OCI-LY7 (cell line): ENCODE measurements at regions of chr2 and their contacts with region 1.

Region 1: DNA sequence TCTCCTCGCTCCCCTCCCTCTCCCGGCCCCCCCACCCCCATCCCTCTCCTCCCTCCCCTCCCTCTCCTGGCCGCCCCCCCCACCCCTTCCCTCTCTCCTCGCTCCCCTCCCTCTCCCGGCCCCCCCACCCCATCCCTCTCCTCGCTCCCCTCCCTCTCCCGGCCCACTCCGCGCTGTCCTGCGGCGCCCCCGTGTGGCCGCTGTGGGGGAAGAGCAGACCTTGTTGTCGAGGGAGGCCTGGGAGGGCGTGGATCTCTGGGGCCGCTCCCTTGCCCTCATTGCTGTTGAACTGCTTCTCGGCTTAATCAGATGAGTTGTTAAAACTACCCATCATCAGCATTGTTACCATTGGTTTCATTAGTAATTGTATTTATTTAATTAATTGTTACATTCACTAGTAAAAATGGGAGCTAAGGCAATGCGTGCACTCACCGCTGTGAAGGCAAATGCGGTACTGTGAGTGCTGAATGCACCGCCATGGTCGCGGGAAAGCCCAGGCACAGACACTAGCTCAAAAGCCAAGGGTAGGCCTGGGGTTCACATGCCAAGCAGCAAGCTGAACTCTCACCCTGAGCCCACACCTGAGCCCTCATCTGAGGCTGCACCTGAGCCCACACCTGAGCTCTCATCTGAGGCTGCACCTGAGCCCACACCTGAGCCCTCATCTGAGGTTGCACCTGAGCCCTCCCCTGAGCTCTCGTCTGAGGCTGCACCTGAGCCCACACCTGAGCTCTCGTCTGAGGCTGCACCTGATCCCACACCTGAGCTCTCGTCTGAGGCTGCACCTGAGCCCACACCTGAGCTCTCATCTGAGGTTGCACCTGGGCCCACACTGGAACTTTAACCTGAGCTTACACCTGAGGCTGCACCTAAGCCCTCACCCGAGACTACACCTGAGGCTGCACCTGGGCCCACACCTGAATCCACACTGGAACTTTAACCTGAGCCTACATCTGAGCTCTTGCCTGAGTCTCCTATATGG is 8.8 kb downstream of the RTP5 start:
- DNase-seq: peak; percentile 65
- H3K4me3 ChIP-seq: no peak overlapping the region
- H3K27ac ChIP-seq: no peak overlapping the region
- H3K4me1 ChIP-seq: peaks cover 23% of the 10 kb centered on the region
- CTCF ChIP-seq: peak; percentile 70

Region 2: GRCh38 chr2:241149925-241150659 is 728.2 kb before region 1 on chr2 and contains the start of gene PPP1R7:
- CTCF ChIA-PET with region 1: no interaction called
- POLR2A ChIA-PET with region 1: no interaction called
- intact Hi-C with region 1: loop called (anchors 10 kb)
- DNase-seq: peak; percentile 96
- H3K4me3 ChIP-seq: peak within 1 kb of the TSS; percentile 94
- H3K27ac ChIP-seq: peak within 1 kb of the TSS; percentile 35
- H3K4me1 ChIP-seq: peaks cover 37% of the 10 kb centered on the region
- CTCF ChIP-seq: no peak
- total RNA-seq, gene PPP1R7: 46.0 and 61.4 TPM in 2 replicates

Region 3: GRCh38 chr2:241686649-241687425 is 191.4 kb before region 1 on chr2 and contains the start of gene DTYMK:
- CTCF ChIA-PET with region 1: no interaction called
- POLR2A ChIA-PET with region 1: no interaction called
- intact Hi-C with region 1: loop called (anchors 5 kb)
- DNase-seq: peak; percentile 96
- H3K4me3 ChIP-seq: peak within 1 kb of the TSS; percentile 90
- H3K27ac ChIP-seq: peak within 1 kb of the TSS; percentile 69
- H3K4me1 ChIP-seq: peaks cover 17% of the 10 kb centered on the region
- CTCF ChIP-seq: no peak
- total RNA-seq, gene DTYMK: 104 and 118 TPM in 2 replicates

Region 4: DNA sequence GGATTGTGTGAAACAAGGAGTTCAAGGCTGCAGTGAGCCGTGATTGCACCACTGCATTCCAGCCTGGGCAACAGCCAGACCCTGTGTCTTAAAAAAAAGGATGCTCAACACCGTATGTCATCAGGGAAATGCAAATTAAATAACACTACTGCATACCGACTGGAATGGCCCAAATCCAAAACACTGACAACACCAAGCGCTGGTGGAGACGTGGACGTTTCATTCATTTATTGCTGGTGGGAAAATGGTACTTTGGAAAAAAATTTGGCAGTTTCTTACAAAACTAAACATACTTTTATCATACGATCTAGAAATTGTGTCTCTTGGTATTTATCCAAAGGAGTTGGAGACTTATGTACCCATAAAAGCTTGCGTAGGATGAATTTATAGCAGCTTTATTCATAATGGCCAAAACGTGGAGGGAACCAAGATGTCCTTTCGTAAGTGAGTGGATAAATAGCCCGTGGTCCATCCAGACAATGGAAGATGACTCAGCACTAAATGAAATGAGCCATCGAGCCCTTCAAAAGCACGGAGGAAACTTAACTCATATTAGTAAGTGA is 45.1 kb before region 1 on chr2:
- CTCF ChIA-PET with region 1: no interaction called
- POLR2A ChIA-PET with region 1: no interaction called
- intact Hi-C with region 1: no loop called
- DNase-seq: no peak
- H3K4me3 ChIP-seq: no peak overlapping the region
- H3K27ac ChIP-seq: no peak overlapping the region
- H3K4me1 ChIP-seq: no peaks in the 10 kb centered on the region
- CTCF ChIP-seq: no peak

Region 5: GRCh38 chr2:241959751-241960269 is 81.5 kb after region 1 on chr2:
- CTCF ChIA-PET with region 1: no interaction called
- POLR2A ChIA-PET with region 1: no interaction called
- intact Hi-C with region 1: loop called (anchors 5 kb)
- DNase-seq: no peak
- H3K4me3 ChIP-seq: no peak overlapping the region
- H3K27ac ChIP-seq: no peak overlapping the region
- H3K4me1 ChIP-seq: peaks cover 36% of the 10 kb centered on the region
- CTCF ChIP-seq: no peak